ENCODE measurements at regions of chr5 and their contacts with region 1.

Region 1: GRCh38 chr5:67165526-67166459 is 30.8 kb downstream of the CD180 start:
- DNase-seq: peak; percentile 81
- H3K4me3 Mint-ChIP-seq: peak overlapping the region; percentile 91
- H3K27ac Mint-ChIP-seq: peak overlapping the region; percentile 94
- H3K4me1 Mint-ChIP-seq: peaks cover 79% of the 10 kb centered on the region
- H3K27me3 Mint-ChIP-seq: no peaks in the 10 kb centered on the region

Region 2: DNA sequence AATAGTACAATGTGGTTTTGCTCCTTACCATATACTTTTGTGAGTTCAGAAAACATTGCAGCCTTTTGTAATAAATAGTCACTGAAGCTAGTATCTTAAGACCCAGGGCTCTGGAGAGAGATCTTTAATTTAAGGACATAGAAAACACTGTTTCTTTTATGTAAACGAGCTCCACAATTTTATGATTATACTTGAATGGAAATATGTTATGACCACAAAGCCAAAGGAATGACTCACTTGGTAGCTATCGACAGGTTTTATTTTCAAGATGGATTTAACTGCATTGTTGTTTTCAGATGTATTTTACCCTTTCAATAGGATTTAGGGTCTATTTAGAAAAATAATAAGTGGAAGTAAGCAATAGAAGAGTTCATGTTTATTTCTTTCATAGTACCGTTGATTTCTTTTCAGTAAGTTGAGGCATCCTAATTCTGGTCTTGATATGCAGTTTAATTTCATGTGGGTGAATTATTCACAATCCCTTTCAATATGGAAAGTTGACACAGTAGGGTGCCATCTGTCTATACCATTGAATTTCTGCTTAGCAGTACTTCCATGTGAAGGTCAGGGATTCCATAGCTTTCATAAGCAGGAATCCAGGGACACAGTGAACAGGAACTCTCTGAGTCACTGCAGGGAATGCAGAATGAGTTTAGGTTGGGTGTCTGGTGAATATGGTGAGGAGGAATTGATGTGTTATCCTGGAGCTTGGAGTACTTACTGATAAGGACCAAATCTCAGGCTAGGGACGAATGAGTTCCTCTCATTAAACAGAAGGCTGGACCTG is 126.8 kb before region 1 on chr5:
- intact Hi-C with region 1: loop called (anchors 5 kb)
- DNase-seq: no peak
- H3K4me3 Mint-ChIP-seq: no peak overlapping the region
- H3K27ac Mint-ChIP-seq: peak overlapping the region; percentile 64
- H3K4me1 Mint-ChIP-seq: peaks cover 42% of the 10 kb centered on the region
- H3K27me3 Mint-ChIP-seq: no peaks in the 10 kb centered on the region

Region 3: DNA sequence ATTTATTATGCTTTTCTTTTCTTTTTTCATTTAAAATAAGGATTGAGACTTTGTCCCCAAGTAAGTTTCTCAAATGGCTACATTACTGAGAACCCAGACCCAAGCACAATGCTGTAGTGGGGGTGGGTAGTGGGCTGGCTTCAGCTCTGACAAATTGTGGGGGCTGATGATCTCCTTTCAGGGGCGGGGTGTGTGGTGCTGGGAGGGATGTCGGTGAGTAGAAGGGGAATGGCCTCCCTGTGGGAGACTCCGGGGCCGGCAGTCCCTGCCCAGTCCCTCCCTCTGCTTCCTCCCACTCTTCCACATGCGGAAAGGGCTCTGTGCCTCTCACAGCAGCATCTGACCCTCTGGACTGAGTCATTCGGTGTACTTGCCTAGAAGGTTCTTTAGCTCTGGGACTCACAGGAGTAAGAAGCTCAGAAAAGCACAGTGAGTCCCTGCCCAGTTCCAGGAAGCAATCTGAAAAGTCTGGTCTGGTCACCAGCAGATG is 16.6 kb after region 1 on chr5:
- intact Hi-C with region 1: loop called (anchors 2 kb)
- DNase-seq: no peak
- H3K4me3 Mint-ChIP-seq: peak overlapping the region; percentile 42
- H3K27ac Mint-ChIP-seq: peak overlapping the region; percentile 86
- H3K4me1 Mint-ChIP-seq: peaks cover 75% of the 10 kb centered on the region
- H3K27me3 Mint-ChIP-seq: no peaks in the 10 kb centered on the region

Region 4: GRCh38 chr5:68215208-68215897 is 1049.6 kb after region 1 on chr5 and contains the start of gene PIK3R1:
- intact Hi-C with region 1: loop called (anchors 5 kb)
- DNase-seq: peak; percentile 88
- H3K4me3 Mint-ChIP-seq: peak within 1 kb of the TSS; percentile 91
- H3K27ac Mint-ChIP-seq: peak within 1 kb of the TSS; percentile 93
- H3K4me1 Mint-ChIP-seq: peaks cover 37% of the 10 kb centered on the region
- H3K27me3 Mint-ChIP-seq: no peaks in the 10 kb centered on the region
- total RNA-seq, gene PIK3R1: 43.3 and 46.2 TPM in 2 replicates

Region 5: GRCh38 chr5:68884883-68885282 is 1719.1 kb after region 1 on chr5:
- intact Hi-C with region 1: loop called (anchors 5 kb)
- DNase-seq: no peak
- H3K4me3 Mint-ChIP-seq: no peak overlapping the region
- H3K27ac Mint-ChIP-seq: no peak overlapping the region
- H3K4me1 Mint-ChIP-seq: peaks cover 27% of the 10 kb centered on the region
- H3K27me3 Mint-ChIP-seq: no peaks in the 10 kb centered on the region